Right ventricle myocardium inferior (tissue), 1 donor: ENCODE measurements at regions of chr17 and their contacts with region 1.

Region 1: DNA sequence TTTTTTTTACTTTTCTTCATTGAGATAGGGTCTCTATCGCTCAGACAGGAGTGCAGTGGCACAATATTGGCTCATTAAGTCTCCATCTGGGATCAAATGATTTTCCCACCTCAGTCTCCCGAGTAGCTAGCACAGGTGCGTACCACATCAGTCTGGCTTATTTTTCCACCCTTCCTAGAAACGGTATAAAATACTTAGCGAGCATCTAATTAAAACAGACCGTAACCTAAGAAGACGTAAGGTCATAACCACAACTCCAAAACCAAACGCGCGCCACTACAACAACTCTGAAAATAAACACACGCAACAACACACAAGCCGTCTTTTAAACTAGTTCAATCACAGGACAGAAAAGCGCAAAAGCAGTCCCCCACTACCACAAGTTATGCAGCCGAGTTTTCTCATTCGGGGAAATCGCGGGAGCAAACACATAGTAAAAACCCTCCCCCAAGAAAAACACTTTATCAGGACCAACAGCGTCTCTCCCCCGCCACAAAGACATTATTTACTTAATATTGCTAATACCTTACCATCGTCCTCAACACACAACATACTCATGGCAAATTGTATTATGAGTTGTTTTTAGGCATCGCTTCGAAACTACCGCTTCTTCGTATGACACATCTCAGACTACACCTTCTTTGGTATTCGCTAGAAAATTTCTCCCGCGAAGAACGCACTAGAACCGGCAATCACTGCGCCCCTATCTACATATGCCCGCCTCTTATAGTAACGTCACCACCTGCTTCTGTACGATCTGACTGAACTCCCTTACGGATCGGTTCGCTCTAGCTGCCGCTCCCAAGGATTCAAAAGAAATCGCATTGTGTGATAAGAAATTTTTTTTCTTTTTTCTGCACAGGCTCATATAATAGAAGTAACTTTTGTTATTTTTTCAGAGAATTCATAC is 32.8 kb downstream of the TEX14 start:
- DNase-seq: no peak
- ATAC-seq: peak; percentile 94

Region 2: DNA sequence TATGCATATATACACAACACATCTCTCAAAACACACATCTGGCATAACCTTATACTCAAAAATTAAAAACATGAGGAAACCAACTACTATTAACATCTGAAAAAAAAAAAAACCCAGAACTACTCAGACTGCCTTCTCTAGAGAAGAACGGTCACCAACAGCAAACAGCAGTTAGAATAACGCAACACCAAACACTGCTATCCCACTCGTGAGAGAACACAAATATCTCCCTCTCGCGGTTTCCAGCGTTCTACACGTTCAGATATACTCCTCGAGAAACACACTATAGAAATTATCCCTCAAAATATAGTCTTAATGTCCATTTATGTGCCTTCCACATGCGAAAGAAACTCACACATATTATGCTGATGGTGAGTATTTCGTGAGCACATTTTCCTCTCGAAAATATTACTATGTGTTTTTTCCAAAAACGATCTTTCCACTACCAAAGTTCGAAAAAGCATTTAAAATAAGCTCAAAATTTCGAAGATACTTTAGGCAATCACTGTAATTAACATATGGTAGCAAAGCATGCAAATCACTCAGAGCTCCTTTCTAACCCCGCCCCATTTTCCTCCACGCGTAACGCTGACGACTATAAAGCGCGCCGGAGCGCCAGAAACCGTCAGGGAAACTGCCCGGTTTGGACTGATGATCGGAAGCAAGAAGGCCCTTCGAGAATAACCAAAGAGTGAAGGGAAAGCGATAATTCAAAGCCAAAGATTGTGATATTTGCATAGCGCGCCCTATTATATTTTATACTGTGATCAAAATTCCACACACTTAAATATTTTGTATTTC is 27.3 kb before region 1 on chr17:
- intact Hi-C with region 1: loop called (anchors 1 kb)
- DNase-seq: peak; percentile 94
- ATAC-seq: peak; percentile 96

Region 3: GRCh38 chr17:58703137-58703972 is 44.3 kb after region 1 on chr17:
- intact Hi-C with region 1: no loop called
- DNase-seq: no peak
- ATAC-seq: no peak